ENCODE measurements at regions of chr14 and their contacts with region 1.

Region 1: DNA sequence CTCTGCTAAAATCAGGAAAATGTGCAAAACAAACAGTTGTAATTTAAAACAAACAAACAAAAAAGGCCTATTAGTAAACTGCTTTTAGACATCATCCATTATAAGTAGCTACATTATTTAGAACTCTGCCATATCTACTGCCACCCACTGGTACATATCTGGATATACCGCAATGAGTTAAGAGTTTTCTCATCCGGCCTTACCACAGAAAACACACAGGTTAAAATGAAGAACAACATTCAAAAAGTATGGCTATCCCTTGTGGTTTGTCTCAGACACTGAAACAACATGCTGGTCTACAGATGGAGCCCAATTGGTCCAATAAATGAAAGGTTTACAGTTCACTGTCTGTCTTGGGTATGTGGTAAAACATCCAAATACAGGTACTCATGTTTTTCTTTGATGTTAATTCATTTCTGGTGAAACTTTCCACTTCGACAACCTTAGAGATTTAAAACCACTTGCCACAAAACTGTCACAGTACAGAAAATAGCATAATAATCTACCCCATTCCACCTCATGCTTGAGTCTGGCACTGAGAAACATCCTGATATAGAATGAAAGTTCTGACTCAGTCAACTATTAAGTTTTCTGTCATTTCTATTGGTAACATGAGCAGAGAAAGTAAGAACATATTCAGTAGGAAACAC is 354.3 kb downstream of the CEP128 start:
- DNase-seq: peak; percentile 46
- H3K4me3 Mint-ChIP-seq: no peak overlapping the region
- H3K27ac Mint-ChIP-seq: peak overlapping the region; percentile 74
- H3K4me1 Mint-ChIP-seq: peaks cover 46% of the 10 kb centered on the region
- H3K27me3 Mint-ChIP-seq: no peaks in the 10 kb centered on the region
- CTCF ChIP-seq: peak; percentile 46

Region 2: DNA sequence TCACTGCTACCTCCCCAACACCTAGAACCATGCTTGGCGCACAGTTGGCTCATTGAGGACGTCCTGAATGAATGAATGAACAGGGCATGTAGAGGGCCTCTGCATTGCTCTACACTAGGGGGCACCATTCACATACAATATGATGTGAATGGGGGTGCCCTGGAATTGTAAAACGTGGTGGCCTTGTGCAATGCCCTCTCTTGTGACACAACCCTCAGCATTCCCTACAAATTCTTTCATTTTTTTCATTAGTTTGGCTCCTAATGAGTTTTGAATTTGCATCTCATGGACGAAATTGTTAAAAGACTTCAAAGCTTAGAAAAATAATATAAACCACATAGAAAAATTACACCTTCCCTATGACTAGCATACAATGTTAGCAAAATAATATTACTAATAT is 373.6 kb before region 1 on chr14:
- CTCF ChIA-PET with region 1: interaction called, 28 read pairs
- POLR2A ChIA-PET with region 1: interaction called, 5 read pairs
- intact Hi-C with region 1: loop called (anchors 1 kb)
- DNase-seq: peak; percentile 83
- H3K4me3 Mint-ChIP-seq: no peak overlapping the region
- H3K27ac Mint-ChIP-seq: no peak overlapping the region
- H3K4me1 Mint-ChIP-seq: peaks cover 11% of the 10 kb centered on the region
- H3K27me3 Mint-ChIP-seq: no peaks in the 10 kb centered on the region
- CTCF ChIP-seq: peak; percentile 79

Region 3: GRCh38 chr14:80381807-80382363 is 205.3 kb before region 1 on chr14:
- CTCF ChIA-PET with region 1: interaction called, 3 read pairs
- POLR2A ChIA-PET with region 1: interaction called, 10 read pairs
- intact Hi-C with region 1: loop called (anchors 5 kb)
- DNase-seq: peak; percentile 35
- H3K4me3 Mint-ChIP-seq: peak overlapping the region; percentile 12
- H3K27ac Mint-ChIP-seq: peak overlapping the region; percentile 96
- H3K4me1 Mint-ChIP-seq: peaks cover 29% of the 10 kb centered on the region
- H3K27me3 Mint-ChIP-seq: no peaks in the 10 kb centered on the region
- CTCF ChIP-seq: no peak

Measured in MCF 10A (cell line).